Gastrocnemius medialis (tissue), 4 donors: ENCODE measurements at regions of chr7 and their contacts with region 1.

Region 1: DNA sequence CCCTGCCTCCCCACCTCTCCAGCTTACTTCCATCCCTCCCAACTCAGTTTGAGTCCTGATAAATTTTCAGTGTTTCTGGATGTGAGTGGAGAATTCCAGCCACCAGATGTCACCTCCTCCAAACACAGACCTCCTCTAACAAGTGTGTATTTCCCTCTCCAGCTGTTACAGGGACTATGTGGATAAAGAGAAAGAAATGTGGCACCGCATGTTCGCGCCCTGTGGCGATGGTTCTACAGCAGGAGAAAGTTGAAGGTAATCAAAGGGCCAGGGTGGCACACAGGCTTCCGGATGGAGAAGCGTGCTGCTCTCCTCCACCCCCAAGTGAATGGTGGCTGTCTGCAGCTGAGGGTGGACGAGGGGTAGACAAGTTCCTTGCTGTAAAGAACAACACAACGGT is 14.7 kb downstream of the FKBP6 start:
- DNase-seq: no peak
- ATAC-seq: peak; percentile 90 to 95
- H3K4me3 ChIP-seq: peak overlapping the region in 2 of 4 donors; percentile 18 to 37
- H3K27ac ChIP-seq: no peak overlapping the region
- H3K4me1 ChIP-seq: no peaks in the 10 kb centered on the region
- H3K27me3 ChIP-seq: no peaks in the 10 kb centered on the region
- CTCF ChIP-seq: peak; percentile 42 to 70 (median 66)
- POLR2A ChIP-seq: no peak

Region 2: GRCh38 chr7:73451780-73452398 is 109.2 kb after region 1 on chr7:
- in situ Hi-C with region 1: loop called (anchors 5 to 10 kb)
- intact Hi-C with region 1: loop called (anchors 1 kb)
- DNase-seq: no peak
- ATAC-seq: peak; percentile 49 to 76
- H3K4me3 ChIP-seq: no peak overlapping the region
- H3K27ac ChIP-seq: no peak overlapping the region
- H3K4me1 ChIP-seq: peaks cover 9 to 14% of the 10 kb centered on the region in 2 donors
- H3K27me3 ChIP-seq: no peaks in the 10 kb centered on the region
- CTCF ChIP-seq: peak; percentile 94 to 99 (median 97)
- POLR2A ChIP-seq: no peak

Region 3: GRCh38 chr7:74002474-74003017 is 659.9 kb after region 1 on chr7:
- in situ Hi-C with region 1: no loop called
- intact Hi-C with region 1: no loop called
- DNase-seq: no peak
- ATAC-seq: peak in 1 of 2 donors; percentile 36
- H3K4me3 ChIP-seq: no peak overlapping the region
- H3K27ac ChIP-seq: peak overlapping the region in 1 of 4 donors; percentile 41
- H3K4me1 ChIP-seq: peaks cover 0 to 4% of the 10 kb centered on the region in 2 donors
- H3K27me3 ChIP-seq: no peaks in the 10 kb centered on the region
- CTCF ChIP-seq: no peak
- POLR2A ChIP-seq: no peak